ENCODE measurements at regions of chr2 and their contacts with region 1.

Region 1: GRCh38 chr2:14288016-14288415 is 344.5 kb upstream of the LRATD1 start:
- DNase-seq: no peak
- H3K4me3 Mint-ChIP-seq: no peak overlapping the region
- H3K27ac Mint-ChIP-seq: no peak overlapping the region
- H3K4me1 Mint-ChIP-seq: no peaks in the 10 kb centered on the region
- H3K27me3 Mint-ChIP-seq: no peaks in the 10 kb centered on the region

Region 2: DNA sequence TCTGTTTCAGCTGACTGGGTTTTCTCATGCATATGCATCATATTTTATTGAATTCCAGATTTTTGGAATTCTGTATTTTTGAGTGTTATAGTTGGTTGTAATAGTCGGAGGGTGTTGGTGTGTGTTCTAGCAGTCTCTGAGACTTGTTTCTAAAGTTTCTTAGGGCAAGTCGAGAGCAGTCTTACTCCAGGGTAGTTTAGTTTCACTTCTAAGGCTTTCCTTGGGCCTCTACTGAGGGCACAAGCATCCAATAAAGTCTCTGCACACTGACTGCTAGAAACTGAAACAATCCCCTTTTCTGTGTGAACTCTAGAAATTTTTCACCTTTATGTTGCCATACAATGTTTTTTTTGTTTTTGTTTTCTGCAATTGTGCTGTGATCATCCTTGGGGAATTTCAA is 319.2 kb before region 1 on chr2:
- intact Hi-C with region 1: loop called (anchors 10 kb)
- DNase-seq: no peak
- H3K4me3 Mint-ChIP-seq: no peak overlapping the region
- H3K27ac Mint-ChIP-seq: no peak overlapping the region
- H3K4me1 Mint-ChIP-seq: no peaks in the 10 kb centered on the region
- H3K27me3 Mint-ChIP-seq: no peaks in the 10 kb centered on the region

Region 3: DNA sequence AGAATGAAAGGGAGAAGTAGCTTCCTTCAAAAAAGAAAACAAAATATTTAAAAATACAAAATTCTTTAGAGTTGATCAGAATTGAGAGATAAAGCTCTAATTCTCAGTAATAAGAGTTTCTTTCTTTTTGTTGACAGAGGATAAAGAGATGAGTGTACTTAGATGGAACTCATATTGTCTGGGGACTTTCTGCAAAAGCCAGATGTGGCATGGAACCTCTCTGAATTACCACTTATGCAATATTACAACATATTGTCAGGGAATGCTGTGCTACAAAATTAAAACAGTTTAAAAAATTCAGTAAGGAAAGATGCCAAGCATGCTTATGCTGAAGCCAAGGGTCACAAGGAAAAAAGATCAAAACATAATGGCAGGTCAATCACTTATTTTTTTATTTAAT is 42.1 kb before region 1 on chr2:
- intact Hi-C with region 1: no loop called
- DNase-seq: no peak
- H3K4me3 Mint-ChIP-seq: no peak overlapping the region
- H3K27ac Mint-ChIP-seq: no peak overlapping the region
- H3K4me1 Mint-ChIP-seq: no peaks in the 10 kb centered on the region
- H3K27me3 Mint-ChIP-seq: no peaks in the 10 kb centered on the region